Esophagus squamous epithelium (tissue), 5 donors: ENCODE measurements at regions of chr16 and their contacts with region 1.

Region 1: DNA sequence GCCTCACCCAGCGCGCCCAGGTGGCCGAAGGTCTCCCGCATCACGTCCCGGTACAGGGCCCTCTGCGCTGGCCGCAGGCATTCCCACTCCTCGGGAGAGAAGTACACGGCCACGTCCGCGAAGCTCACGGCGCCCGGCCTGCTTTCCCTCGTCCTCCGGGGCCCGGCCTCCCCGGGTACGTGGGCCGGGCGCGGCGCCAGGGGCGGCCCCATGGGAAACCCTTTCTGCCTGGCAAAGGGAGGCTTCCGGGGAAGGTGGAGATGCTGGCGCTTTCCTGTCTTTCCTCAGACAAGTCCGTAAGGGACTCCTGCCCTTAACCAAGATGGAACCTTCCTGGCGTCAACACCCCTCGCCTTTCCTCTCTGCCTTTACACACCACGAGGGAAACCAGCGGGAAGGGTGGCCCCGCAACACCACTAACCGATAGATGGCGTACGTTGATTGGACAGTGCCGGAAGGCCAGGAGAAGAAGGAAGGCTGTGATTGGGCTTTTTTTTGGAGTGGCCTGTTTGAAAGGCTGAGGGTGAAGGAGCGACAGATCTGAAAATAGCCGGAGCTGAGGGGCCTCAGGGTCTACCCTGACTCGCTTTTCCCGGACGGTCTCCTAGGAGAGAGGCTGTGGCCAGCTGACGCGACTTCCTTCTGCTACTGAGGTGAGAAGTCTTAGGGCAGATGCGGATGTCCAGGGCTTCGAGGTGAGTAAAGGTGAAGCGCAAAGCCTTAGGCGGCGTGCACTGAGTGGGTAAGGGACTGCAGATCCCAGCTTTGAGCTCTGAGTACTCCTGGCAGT is at the start of gene ZNF785:
- DNase-seq: peak; percentile 74
- H3K4me3 ChIP-seq: peak within 1 kb of the TSS; percentile 56 to 96 (median 80)
- H3K27ac ChIP-seq: peak within 1 kb of the TSS; percentile 86 to 96 (median 96)
- H3K4me1 ChIP-seq: peaks cover 16 to 48% (median 19%) of the 10 kb centered on the region in 3 donors
- H3K27me3 ChIP-seq: no peaks in the 10 kb centered on the region
- CTCF ChIP-seq: peak in 5 of 6 experiments; percentile 32 to 63 (median 33)
- POLR2A ChIP-seq: peak in 1 of 4 donors; percentile 32
- total RNA-seq, gene ZNF785: 2.7 to 10.9 (median 5.6) TPM

Region 2: GRCh38 chr16:30649725-30650368 is 64.3 kb after region 1 on chr16:
- intact Hi-C with region 1: loop called (anchors 10 kb)
- DNase-seq: no peak
- H3K4me3 ChIP-seq: peak overlapping the region; percentile 43 to 98 (median 88)
- H3K27ac ChIP-seq: peak overlapping the region; percentile 83 to 99 (median 98)
- H3K4me1 ChIP-seq: peaks cover 9 to 33% (median 17%) of the 10 kb centered on the region in 3 donors
- H3K27me3 ChIP-seq: no peaks in the 10 kb centered on the region
- CTCF ChIP-seq: no peak
- POLR2A ChIP-seq: no peak